Head of caudate nucleus (tissue), 42 donors: ENCODE measurements at regions of chr2 and their contacts with region 1.

Region 1: DNA sequence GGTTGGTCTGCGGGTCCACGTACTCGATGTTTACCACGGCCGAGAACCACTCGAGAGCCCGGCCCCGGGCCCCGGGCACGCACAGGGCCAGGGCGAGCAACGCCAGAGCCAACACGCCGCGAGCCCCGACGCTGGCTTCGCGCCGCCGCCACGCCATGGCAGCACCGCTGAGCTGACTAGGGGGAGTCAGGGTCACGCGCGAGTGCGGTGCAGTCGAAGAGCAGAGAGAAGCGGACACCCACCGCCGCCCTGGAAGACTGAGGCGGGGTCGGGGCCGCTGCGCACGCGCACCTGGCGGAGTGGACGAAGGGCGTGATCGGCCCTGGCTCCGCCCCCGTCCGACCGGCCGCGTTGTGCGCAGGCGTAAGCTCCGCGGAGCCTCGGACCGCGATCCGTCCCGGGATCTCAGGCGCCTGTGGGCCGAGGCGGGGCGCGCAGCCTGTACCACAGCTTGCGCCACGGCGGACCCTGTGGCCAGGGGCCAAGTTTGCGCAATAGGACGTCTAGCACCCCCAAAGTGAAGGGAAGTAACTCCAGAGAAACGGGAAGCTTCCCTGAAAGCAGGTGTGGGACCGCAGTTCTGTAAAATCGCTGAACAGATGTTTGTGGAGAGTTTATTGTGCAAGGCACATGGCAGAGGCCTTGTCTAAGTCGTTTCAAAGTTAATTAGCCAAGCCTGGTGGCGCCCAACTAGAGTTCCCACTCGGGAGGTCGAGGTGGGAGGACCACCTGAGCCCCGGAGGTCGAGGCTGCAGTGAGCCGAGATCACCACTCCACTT is at the start of gene RNF149:
- DNase-seq: peak; percentile 68 to 97 (median 92)

Region 2: DNA sequence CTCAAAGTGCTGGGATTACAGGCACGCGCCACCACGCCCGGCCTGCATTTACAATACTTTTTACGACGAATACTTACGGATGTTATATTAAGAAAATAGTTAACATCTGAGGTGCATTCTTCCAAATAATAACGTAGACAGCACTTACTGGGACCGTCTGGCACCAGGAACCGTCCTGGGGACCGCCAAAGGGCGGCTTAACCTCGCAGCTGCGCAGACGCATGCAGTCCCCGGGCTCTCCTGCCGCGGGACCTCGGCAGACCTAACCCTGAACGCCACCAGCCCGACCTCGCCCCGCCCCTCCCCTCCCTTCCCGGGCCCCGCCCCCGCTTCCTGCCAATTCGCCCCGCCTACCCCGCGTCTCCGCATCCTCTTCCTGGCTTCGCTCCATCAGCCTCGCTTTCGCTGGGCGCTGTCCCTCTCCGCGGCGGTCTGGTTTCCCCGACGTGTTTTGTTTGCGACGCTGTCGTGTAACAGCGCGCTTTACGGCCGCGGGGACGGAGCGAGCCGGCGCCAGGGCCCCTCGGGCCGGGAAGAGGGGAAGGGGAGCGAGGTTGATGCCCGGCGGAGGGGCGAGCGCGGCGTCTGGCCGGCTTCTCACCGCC is 56.1 kb before region 1 on chr2 and contains the start of gene CNOT11:
- intact Hi-C with region 1: loop called (anchors 5 kb)
- DNase-seq: peak; percentile 94 to 100 (median 98)